CD4-positive, alpha-beta memory T cell (primary cell): ENCODE measurements at regions of chr14 and their contacts with region 1.

Region 1: DNA sequence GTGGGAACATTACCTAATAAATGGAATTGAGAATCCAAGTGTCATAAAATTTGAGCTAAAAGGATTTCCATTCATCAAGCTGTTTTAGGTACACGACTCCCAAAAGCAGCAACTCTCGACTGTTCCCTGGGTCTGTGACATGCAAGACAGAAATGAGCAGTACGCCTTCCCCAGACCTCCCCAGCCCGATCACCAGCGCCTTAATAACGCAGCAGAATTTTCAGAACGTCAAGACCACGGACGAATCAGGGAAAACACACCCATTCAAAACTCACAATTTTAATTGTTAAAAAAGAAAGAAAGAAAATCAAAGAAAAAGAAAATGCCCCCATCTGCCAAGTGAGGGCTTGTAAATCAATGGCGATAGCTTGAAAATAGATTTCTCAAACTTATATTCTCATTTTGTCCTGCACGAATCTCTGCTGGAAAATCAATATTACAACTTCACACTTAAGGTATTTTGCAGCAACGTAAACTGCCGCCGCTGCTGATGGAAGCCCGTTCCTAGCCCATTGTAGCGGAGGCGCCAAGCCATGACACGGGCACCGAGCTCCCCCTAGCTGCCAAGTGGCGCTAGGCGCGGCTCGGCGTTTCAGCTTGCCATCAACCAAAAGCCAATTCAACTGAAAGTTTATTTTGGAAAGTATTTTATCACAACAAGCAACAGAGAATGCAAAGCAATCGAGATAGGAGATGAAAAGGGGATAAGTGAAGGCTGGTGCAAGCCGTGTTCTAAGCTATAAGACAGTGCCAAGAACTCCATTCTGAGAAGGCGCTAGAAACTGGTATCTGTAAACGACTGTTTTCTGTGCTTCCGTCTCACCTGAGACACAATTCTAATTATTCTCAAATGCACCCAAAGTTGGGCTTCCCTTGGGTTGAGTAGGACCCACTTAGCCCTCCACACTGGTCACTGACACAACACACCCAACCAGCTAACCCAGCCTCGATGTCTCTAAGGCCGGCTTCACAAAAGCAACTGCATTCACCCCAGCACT is 5.5 kb downstream of the BCL11B start:
- DNase-seq: peak; percentile 87 to 90 (median 88)
- H3K4me3 ChIP-seq: peak overlapping the region; percentile 91 to 99
- H3K4me3 Mint-ChIP-seq: peak overlapping the region; percentile 94 to 100 (median 98)
- H3K27ac ChIP-seq: peak overlapping the region; percentile 98
- H3K27ac Mint-ChIP-seq: peak overlapping the region; percentile 99 to 100 (median 100)
- H3K4me1 ChIP-seq: peaks cover 54% of the 10 kb centered on the region
- H3K4me1 Mint-ChIP-seq: peaks cover 42 to 72% (median 55%) of the 10 kb centered on the region in 4 donors
- H3K27me3 ChIP-seq: no peaks in the 10 kb centered on the region
- H3K27me3 Mint-ChIP-seq: no peaks in the 10 kb centered on the region

Region 2: DNA sequence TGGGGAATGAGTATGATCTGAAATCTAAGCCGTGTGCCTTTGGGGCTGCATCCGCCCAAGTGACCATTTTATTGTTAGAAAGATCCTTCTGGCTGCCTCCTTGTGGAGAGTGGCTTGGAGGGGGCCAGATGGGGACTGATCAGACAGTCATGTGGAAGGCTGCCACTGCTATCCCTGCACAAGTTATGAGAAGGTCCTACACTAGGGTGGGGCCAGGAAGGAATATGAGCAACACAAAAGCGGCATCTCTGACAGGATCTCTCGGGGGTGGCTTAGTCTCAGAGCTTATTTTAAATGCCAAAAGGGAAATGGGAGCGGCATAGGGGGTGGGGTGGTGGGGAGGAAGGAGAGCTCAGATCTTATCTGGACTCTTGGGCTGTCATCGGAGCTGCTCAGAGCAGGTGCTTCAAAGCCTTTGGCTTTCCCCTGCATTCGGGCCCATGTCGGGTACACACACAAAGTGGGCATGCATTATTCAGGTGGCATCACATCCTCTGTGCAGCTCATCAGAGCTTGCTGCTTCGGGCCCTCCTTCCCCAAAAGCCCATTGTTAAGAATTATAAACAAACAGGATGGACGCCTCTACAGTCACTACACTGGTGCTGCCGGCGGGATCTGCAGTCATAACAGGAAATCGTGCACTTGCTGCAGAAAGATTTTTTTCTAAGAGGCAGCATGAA is 1663.9 kb before region 1 on chr14:
- CTCF ChIA-PET with region 1: interaction called, 5 read pairs
- POLR2A ChIA-PET with region 1: interaction called, 25 read pairs
- intact Hi-C with region 1: no loop called
- DNase-seq: peak; percentile 83 to 94 (median 88)
- H3K4me3 ChIP-seq: peak overlapping the region; percentile 5 to 21
- H3K4me3 Mint-ChIP-seq: no peak overlapping the region
- H3K27ac ChIP-seq: peak overlapping the region; percentile 72
- H3K27ac Mint-ChIP-seq: no peak overlapping the region
- H3K4me1 ChIP-seq: peaks cover 69% of the 10 kb centered on the region
- H3K4me1 Mint-ChIP-seq: peaks cover 4 to 41% (median 19%) of the 10 kb centered on the region in 4 donors
- H3K27me3 ChIP-seq: no peaks in the 10 kb centered on the region
- H3K27me3 Mint-ChIP-seq: no peaks in the 10 kb centered on the region

Region 3: GRCh38 chr14:98210045-98210672 is 1056.3 kb before region 1 on chr14:
- CTCF ChIA-PET with region 1: interaction called, 3 read pairs
- POLR2A ChIA-PET with region 1: interaction called, 13 read pairs
- intact Hi-C with region 1: no loop called
- DNase-seq: peak in 3 of 5 donors; percentile 34 to 49 (median 36)
- H3K4me3 ChIP-seq: peak overlapping the region in 1 of 2 donors; percentile 27
- H3K4me3 Mint-ChIP-seq: peak overlapping the region; percentile 36 to 87 (median 80)
- H3K27ac ChIP-seq: peak overlapping the region; percentile 38
- H3K27ac Mint-ChIP-seq: peak overlapping the region; percentile 92 to 97 (median 96)
- H3K4me1 ChIP-seq: peaks cover 77% of the 10 kb centered on the region
- H3K4me1 Mint-ChIP-seq: peaks cover 68 to 92% (median 80%) of the 10 kb centered on the region in 4 donors
- H3K27me3 ChIP-seq: no peaks in the 10 kb centered on the region
- H3K27me3 Mint-ChIP-seq: no peaks in the 10 kb centered on the region

Region 4: DNA sequence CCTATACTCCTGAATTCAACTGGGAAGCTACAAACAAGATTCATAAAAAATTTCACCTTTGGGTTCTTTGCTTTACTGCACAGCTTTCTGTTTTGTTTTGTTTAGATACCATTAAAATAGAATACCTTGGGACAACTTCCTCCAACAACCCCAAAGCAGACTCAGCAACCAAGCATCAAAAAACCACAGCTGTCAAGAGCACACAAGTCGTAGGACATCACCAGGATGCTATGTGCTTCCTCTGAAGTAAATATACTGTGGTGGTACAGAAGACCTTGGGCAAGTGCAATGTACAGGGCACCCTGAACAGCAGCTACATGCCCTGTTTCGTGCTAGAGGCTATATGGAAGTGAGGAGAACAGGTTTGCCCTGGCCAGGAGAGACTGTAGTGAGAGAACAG is 353.8 kb before region 1 on chr14:
- CTCF ChIA-PET with region 1: interaction called, 10 read pairs
- POLR2A ChIA-PET with region 1: interaction called, 15 read pairs
- intact Hi-C with region 1: no loop called
- DNase-seq: peak in 4 of 5 donors; percentile 34 to 55 (median 52)
- H3K4me3 ChIP-seq: no peak overlapping the region
- H3K4me3 Mint-ChIP-seq: peak overlapping the region in 6 of 8 donors; percentile 5 to 38 (median 16)
- H3K27ac ChIP-seq: no peak overlapping the region
- H3K27ac Mint-ChIP-seq: peak overlapping the region; percentile 10 to 92 (median 77)
- H3K4me1 ChIP-seq: peaks cover 20% of the 10 kb centered on the region
- H3K4me1 Mint-ChIP-seq: peaks cover 24 to 44% (median 31%) of the 10 kb centered on the region in 4 donors
- H3K27me3 ChIP-seq: no peaks in the 10 kb centered on the region
- H3K27me3 Mint-ChIP-seq: peaks cover 0 to 1% of the 10 kb centered on the region in 2 donors

Region 5: GRCh38 chr14:99192028-99192621 is 74.4 kb before region 1 on chr14:
- CTCF ChIA-PET with region 1: interaction called, 39 read pairs
- POLR2A ChIA-PET with region 1: interaction called, 6,015 read pairs
- intact Hi-C with region 1: loop called (anchors 2 kb)
- DNase-seq: peak in 3 of 5 donors; percentile 58 to 75 (median 62)
- H3K4me3 ChIP-seq: peak overlapping the region; percentile 48 to 75
- H3K4me3 Mint-ChIP-seq: peak overlapping the region; percentile 81 to 94 (median 88)
- H3K27ac ChIP-seq: peak overlapping the region; percentile 81
- H3K27ac Mint-ChIP-seq: peak overlapping the region; percentile 92 to 99 (median 98)
- H3K4me1 ChIP-seq: peaks cover 94% of the 10 kb centered on the region
- H3K4me1 Mint-ChIP-seq: peaks cover 80 to 97% (median 90%) of the 10 kb centered on the region in 4 donors
- H3K27me3 ChIP-seq: no peaks in the 10 kb centered on the region
- H3K27me3 Mint-ChIP-seq: no peaks in the 10 kb centered on the region

Region 6: GRCh38 chr14:99224116-99224910 is 42.2 kb before region 1 on chr14:
- CTCF ChIA-PET with region 1: interaction called, 270 read pairs
- POLR2A ChIA-PET with region 1: interaction called, 6,015 read pairs
- intact Hi-C with region 1: no loop called
- DNase-seq: no peak
- H3K4me3 ChIP-seq: no peak overlapping the region
- H3K4me3 Mint-ChIP-seq: peak overlapping the region; percentile 56 to 94 (median 66)
- H3K27ac ChIP-seq: peak overlapping the region; percentile 98
- H3K27ac Mint-ChIP-seq: peak overlapping the region; percentile 94 to 99 (median 99)
- H3K4me1 ChIP-seq: peaks cover 97% of the 10 kb centered on the region
- H3K4me1 Mint-ChIP-seq: peaks cover 81 to 98% (median 92%) of the 10 kb centered on the region in 4 donors
- H3K27me3 ChIP-seq: no peaks in the 10 kb centered on the region
- H3K27me3 Mint-ChIP-seq: no peaks in the 10 kb centered on the region

Region 7: GRCh38 chr14:99245564-99246511 is 20.6 kb before region 1 on chr14:
- CTCF ChIA-PET with region 1: interaction called, 181 read pairs
- POLR2A ChIA-PET with region 1: interaction called, 6,015 read pairs
- intact Hi-C with region 1: loop called (anchors 1 kb)
- DNase-seq: peak in 1 of 5 donors; percentile 35
- H3K4me3 ChIP-seq: peak overlapping the region in 1 of 2 donors; percentile 60
- H3K4me3 Mint-ChIP-seq: peak overlapping the region; percentile 86 to 99 (median 90)
- H3K27ac ChIP-seq: peak overlapping the region; percentile 98
- H3K27ac Mint-ChIP-seq: peak overlapping the region; percentile 98 to 99 (median 99)
- H3K4me1 ChIP-seq: peaks cover 91% of the 10 kb centered on the region
- H3K4me1 Mint-ChIP-seq: peaks cover 63 to 89% (median 78%) of the 10 kb centered on the region in 4 donors
- H3K27me3 ChIP-seq: no peaks in the 10 kb centered on the region
- H3K27me3 Mint-ChIP-seq: no peaks in the 10 kb centered on the region

Region 8: GRCh38 chr14:99524804-99525698 is 258.6 kb after region 1 on chr14:
- CTCF ChIA-PET with region 1: no interaction called
- POLR2A ChIA-PET with region 1: no interaction called
- intact Hi-C with region 1: no loop called
- DNase-seq: peak in 4 of 5 donors; percentile 8 to 30 (median 24)
- H3K4me3 ChIP-seq: no peak overlapping the region
- H3K4me3 Mint-ChIP-seq: peak overlapping the region; percentile 51 to 83 (median 70)
- H3K27ac ChIP-seq: no peak overlapping the region
- H3K27ac Mint-ChIP-seq: peak overlapping the region; percentile 15 to 95 (median 93)
- H3K4me1 ChIP-seq: peaks cover 20% of the 10 kb centered on the region
- H3K4me1 Mint-ChIP-seq: peaks cover 5 to 22% (median 12%) of the 10 kb centered on the region in 4 donors
- H3K27me3 ChIP-seq: no peaks in the 10 kb centered on the region
- H3K27me3 Mint-ChIP-seq: no peaks in the 10 kb centered on the region